Mammary epithelial cell (primary cell): ENCODE measurements at regions of chr14 and their contacts with region 1.

Region 1: GRCh38 chr14:30159374-30159773 is 231.7 kb upstream of the PRKD1 start:
- DNase-seq: no peak
- H3K4me3 ChIP-seq: no peak overlapping the region
- H3K27ac ChIP-seq: no peak overlapping the region
- H3K4me1 ChIP-seq: no peaks in the 10 kb centered on the region
- H3K27me3 ChIP-seq: peaks cover 3% of the 10 kb centered on the region
- CTCF ChIP-seq: no peak

Region 2: DNA sequence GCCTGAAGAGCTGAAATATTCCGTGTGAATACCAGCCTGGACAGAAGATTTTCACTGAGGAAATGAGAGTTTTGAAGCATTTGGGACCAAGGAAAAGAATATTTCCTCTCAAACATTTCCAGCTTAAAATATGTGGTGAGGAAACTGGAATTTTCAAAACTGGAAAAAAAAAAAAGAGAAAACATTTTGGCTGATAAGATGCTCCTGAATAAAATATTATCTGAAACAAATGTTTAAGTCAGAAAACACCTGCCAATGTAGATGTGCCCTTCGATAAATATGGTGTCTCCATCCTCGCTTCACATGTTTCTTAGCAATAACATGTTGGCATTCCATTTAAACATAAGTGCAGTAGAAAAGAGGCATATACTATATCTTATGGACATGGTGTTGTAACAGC is 798.7 kb before region 1 on chr14:
- CTCF ChIA-PET with region 1: no interaction called
- dilution Hi-C with region 1: no loop called
- in situ Hi-C with region 1: no loop called
- intact Hi-C with region 1: no loop called
- DNase-seq: no peak
- H3K4me3 ChIP-seq: no peak overlapping the region
- H3K27ac ChIP-seq: no peak overlapping the region
- H3K4me1 ChIP-seq: no peaks in the 10 kb centered on the region
- H3K27me3 ChIP-seq: no peaks in the 10 kb centered on the region
- CTCF ChIP-seq: no peak

Region 3: DNA sequence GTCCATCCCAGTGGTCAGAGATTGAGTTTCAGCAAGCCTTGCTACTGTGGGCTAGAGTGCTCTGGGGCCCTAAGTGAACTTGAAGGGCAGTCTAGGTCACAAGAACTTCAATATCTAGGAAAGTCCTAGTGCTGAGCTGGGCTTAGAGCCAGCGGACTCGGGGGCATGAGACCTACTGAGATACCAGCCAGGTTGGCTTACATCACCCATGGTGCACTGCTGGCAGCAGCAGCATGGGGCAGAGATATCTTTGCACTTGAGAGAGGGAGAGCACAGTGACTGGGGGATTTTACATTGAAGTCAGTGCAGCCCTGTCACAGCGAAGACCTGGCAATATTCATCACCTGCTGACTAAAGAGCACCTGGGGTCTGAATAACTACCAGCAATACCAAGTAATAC is 73.4 kb before region 1 on chr14:
- CTCF ChIA-PET with region 1: no interaction called
- dilution Hi-C with region 1: loop called (anchors 5 kb)
- in situ Hi-C with region 1: no loop called
- intact Hi-C with region 1: no loop called
- DNase-seq: no peak
- H3K4me3 ChIP-seq: no peak overlapping the region
- H3K27ac ChIP-seq: no peak overlapping the region
- H3K4me1 ChIP-seq: no peaks in the 10 kb centered on the region
- H3K27me3 ChIP-seq: no peaks in the 10 kb centered on the region
- CTCF ChIP-seq: no peak

Region 4: DNA sequence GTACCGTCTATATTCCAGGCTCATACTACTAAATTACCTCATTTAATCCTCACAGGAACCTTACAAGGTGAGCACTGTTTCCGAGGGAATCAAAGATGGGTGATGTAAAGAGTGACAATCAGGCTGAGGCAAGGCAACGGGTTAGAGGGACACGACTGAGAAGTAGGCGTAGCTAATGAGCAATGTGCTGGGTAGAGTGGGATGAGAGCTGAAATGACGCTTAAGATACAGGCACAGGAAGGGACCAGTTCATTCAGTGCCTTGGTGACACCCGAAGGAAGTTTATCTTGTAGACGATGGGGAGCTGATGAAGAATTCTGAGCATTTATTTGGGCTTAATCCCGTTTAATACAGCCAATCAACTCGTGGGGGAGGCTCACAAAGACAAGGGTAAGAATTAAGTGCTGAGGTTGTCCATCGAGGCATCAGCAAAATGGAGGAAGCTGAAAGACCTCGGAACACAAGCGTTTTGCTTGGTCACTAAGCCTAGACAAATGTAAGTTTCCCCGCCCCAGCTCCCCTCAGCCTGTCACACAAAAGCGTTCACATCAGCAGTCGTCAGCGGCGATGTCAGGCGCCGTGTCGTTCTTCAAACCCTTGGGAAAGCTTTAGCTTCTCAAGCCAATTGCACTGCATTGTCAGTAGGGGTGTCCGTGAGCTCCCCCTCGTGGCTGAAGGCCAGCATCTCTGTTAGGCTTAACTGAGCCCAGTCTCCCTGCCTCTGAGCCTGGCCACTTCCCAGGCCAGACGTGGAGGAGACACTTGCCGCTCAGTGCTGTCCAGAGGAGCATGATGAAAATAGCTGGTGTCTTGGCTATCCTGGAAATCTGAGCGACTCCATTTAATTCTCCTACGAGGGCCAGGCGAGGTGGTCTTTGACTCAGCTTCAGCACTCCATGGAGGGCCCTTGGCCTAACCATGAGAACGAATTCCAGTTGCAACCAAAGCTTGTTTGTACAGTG is 111.1 kb after region 1 on chr14:
- CTCF ChIA-PET with region 1: no interaction called
- dilution Hi-C with region 1: no loop called
- in situ Hi-C with region 1: no loop called
- intact Hi-C with region 1: no loop called
- DNase-seq: peak; percentile 70
- H3K4me3 ChIP-seq: peak overlapping the region in 2 of 3 experiments; percentile 17 to 34
- H3K27ac ChIP-seq: no peak overlapping the region
- H3K4me1 ChIP-seq: peaks cover 8% of the 10 kb centered on the region
- H3K27me3 ChIP-seq: no peaks in the 10 kb centered on the region
- CTCF ChIP-seq: peak; percentile 90 to 97